Activated CD8-positive, alpha-beta T cell treated with anti-CD3 and anti-CD28 coated beads for 36 hours (primary cell): ENCODE measurements at regions of chr22 and their contacts with region 1.

Region 1: GRCh38 chr22:37260901-37261336 is 16.9 kb upstream of the RAC2 start:
- DNase-seq: peak; percentile 77
- ATAC-seq: peak; percentile 86
- H3K4me3 Mint-ChIP-seq: no peak overlapping the region
- H3K27ac Mint-ChIP-seq: peak overlapping the region; percentile 58
- H3K4me1 Mint-ChIP-seq: peaks cover 28% of the 10 kb centered on the region
- H3K27me3 Mint-ChIP-seq: no peaks in the 10 kb centered on the region
- CTCF ChIP-seq: peak; percentile 97

Region 2: GRCh38 chr22:37210041-37210803 is 50.7 kb before region 1 on chr22:
- CTCF ChIA-PET with region 1: interaction called, 13 read pairs
- POLR2A ChIA-PET with region 1: no interaction called
- intact Hi-C with region 1: no loop called
- DNase-seq: peak; percentile 2
- ATAC-seq: no peak
- H3K4me3 Mint-ChIP-seq: no peak overlapping the region
- H3K27ac Mint-ChIP-seq: no peak overlapping the region
- H3K4me1 Mint-ChIP-seq: peaks cover 48% of the 10 kb centered on the region
- H3K27me3 Mint-ChIP-seq: no peaks in the 10 kb centered on the region
- CTCF ChIP-seq: no peak

Region 3: DNA sequence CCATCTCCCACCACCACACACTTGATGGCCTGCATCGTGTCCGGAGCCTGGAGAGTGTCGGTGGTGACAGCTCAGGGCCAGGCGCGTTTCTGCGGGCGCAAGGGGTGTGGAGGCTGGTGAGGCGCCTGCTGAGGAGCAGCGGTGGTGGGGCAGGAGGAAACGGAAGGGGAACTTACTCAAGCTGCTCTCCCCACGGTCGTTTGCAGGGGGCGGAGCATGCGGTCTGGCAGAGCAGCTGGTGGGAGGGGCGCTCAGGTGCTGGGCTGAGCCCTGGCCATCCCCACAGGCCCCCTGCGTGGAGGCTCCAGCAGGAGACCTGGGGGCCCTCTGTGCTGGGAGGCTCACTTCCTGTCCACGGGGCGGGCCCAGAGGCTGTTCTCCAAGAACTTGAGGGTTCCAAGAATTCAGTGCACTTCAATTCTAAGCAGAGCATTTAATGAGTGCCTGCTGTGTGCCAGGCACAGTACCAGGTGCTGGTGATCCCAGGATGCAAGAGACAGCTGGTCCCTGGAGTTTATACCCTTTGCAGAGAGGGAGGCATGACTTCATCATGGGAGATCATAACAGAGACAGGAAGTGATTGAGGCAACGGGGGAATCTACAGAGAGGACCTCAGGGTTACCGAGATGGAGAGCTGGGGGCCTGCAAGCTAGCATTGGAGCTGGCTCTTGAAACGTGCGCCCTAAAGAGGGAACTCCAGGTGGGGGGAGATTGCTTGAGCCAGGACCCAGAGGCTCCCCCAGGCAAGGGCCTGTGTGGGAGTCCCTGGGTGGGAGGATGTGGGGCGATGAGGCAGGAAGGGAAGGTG is 16.6 kb before region 1 on chr22 and contains the start of gene RAC2:
- CTCF ChIA-PET with region 1: interaction called, 154 read pairs
- POLR2A ChIA-PET with region 1: interaction called, 20 read pairs
- intact Hi-C with region 1: no loop called
- DNase-seq: peak; percentile 98
- ATAC-seq: peak; percentile 71
- H3K4me3 Mint-ChIP-seq: peak within 1 kb of the TSS; percentile 98
- H3K27ac Mint-ChIP-seq: peak within 1 kb of the TSS; percentile 97
- H3K4me1 Mint-ChIP-seq: peaks cover 42% of the 10 kb centered on the region
- H3K27me3 Mint-ChIP-seq: no peaks in the 10 kb centered on the region
- CTCF ChIP-seq: no peak
- total RNA-seq, gene RAC2: 699 to 717 TPM

Region 4: GRCh38 chr22:37282385-37282677 is 21.4 kb after region 1 on chr22 and contains the start of gene CYTH4:
- CTCF ChIA-PET with region 1: interaction called, 39 read pairs
- POLR2A ChIA-PET with region 1: no interaction called
- intact Hi-C with region 1: no loop called
- DNase-seq: peak; percentile 91
- ATAC-seq: peak; percentile 86
- H3K4me3 Mint-ChIP-seq: peak within 1 kb of the TSS; percentile 86
- H3K27ac Mint-ChIP-seq: peak within 1 kb of the TSS; percentile 99
- H3K4me1 Mint-ChIP-seq: peaks cover 61% of the 10 kb centered on the region
- H3K27me3 Mint-ChIP-seq: no peaks in the 10 kb centered on the region
- CTCF ChIP-seq: no peak
- total RNA-seq, gene CYTH4: 33.2 to 33.4 TPM

Region 5: GRCh38 chr22:37309211-37310074 is 48.5 kb after region 1 on chr22:
- CTCF ChIA-PET with region 1: interaction called, 40 read pairs
- POLR2A ChIA-PET with region 1: interaction called, 3 read pairs
- intact Hi-C with region 1: no loop called
- DNase-seq: peak; percentile 78
- ATAC-seq: peak; percentile 51
- H3K4me3 Mint-ChIP-seq: peak overlapping the region; percentile 39
- H3K27ac Mint-ChIP-seq: peak overlapping the region; percentile 85
- H3K4me1 Mint-ChIP-seq: peaks cover 92% of the 10 kb centered on the region
- H3K27me3 Mint-ChIP-seq: no peaks in the 10 kb centered on the region
- CTCF ChIP-seq: no peak

Region 6: DNA sequence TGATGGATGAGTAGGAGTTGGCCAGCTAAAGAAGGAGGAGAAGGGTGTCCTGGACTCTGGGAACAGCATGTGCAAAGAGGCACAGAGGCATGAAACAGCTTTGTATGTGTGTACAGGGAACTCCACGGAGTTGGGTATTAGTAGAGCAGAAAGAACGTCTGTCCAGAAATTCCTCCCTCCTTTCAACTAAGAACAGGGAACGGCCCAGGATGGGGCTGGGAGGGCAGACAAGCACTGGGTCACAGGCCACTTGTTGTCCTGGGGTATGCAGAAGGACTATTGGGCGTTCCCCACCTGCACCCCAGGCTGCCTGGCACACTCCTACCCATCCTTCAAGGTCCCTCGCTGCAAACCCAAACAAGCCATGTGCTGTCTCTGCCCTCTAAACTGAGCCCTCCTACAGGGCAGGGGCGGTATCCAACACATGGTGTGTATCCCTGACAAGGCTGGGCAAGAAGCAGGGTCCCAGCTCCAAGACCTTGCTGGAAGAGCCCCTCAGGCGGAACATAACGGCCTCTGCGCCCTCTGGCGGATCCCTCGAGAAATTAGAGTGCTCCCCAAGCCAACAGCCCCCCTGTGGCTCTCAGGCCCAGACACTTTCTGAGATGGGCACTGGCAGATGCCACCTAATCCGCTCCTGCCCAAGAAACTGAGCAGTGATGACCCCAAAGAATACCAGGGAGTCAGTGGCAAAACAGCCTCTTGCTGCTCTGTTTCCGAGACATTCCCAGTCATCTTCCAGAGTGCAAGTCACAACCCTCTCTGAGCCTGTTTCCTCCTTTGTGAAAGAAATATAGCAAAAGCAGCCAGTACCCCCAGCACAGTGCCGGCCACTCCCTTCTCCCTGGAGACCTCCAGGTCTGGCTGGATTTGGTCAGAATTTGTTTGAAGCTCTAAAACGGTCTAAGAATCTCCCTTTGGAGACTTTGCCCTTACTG is 168.0 kb after region 1 on chr22:
- CTCF ChIA-PET with region 1: interaction called, 13 read pairs
- POLR2A ChIA-PET with region 1: interaction called, 4 read pairs
- intact Hi-C with region 1: no loop called
- DNase-seq: peak; percentile 75
- ATAC-seq: no peak
- H3K4me3 Mint-ChIP-seq: no peak overlapping the region
- H3K27ac Mint-ChIP-seq: no peak overlapping the region
- H3K4me1 Mint-ChIP-seq: peaks cover 23% of the 10 kb centered on the region
- H3K27me3 Mint-ChIP-seq: peaks cover 53% of the 10 kb centered on the region
- CTCF ChIP-seq: peak; percentile 88